ENCODE measurements at regions of chr11 and their contacts with region 1.

Region 1: GRCh38 chr11:62169091-62169847 is 20.7 kb upstream of the SCGB1D1 start:
- DNase-seq: no peak
- H3K4me3 ChIP-seq: no peak overlapping the region
- H3K4me3 Mint-ChIP-seq: no peak overlapping the region
- H3K27ac Mint-ChIP-seq: no peak overlapping the region
- H3K4me1 ChIP-seq: no peaks in the 10 kb centered on the region
- H3K4me1 Mint-ChIP-seq: no peaks in the 10 kb centered on the region
- H3K27me3 ChIP-seq: 0 out of 2 replicates have a peak, but pooled peaks cover 1% of the 10 kb centered on the region
- H3K27me3 Mint-ChIP-seq: peaks cover 12% of the 10 kb centered on the region
- CTCF ChIP-seq: no peak

Region 2: GRCh38 chr11:62104816-62105653 is 64.2 kb before region 1 on chr11:
- CTCF ChIA-PET with region 1: no interaction called
- POLR2A ChIA-PET with region 1: no interaction called
- intact Hi-C with region 1: no loop called
- DNase-seq: no peak
- H3K4me3 ChIP-seq: no peak overlapping the region
- H3K4me3 Mint-ChIP-seq: no peak overlapping the region
- H3K27ac Mint-ChIP-seq: no peak overlapping the region
- H3K4me1 ChIP-seq: peaks cover 3% of the 10 kb centered on the region; the same call in 1 of the 2 replicates
- H3K4me1 Mint-ChIP-seq: no peaks in the 10 kb centered on the region
- H3K27me3 ChIP-seq: no peaks in the 10 kb centered on the region
- H3K27me3 Mint-ChIP-seq: no peaks in the 10 kb centered on the region
- CTCF ChIP-seq: no peak

Region 3: DNA sequence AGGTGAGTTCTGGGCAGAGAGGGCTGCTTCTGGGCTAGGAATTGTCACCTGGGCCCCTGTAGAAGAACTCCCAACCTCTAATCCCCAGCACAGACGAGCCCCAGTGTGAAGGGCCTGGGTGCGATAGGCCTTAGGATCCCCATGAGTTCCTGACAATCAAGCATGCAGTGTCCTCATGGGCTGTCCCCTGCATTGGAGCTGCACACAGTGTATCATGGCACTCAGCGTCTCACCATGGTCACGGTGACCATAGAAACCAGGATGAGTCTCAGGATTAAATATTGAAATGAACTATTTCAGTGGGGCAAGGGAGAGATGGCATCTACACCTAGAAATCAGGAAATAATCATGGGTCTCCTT is 39.5 kb after region 1 on chr11:
- CTCF ChIA-PET with region 1: interaction called, 4 read pairs
- POLR2A ChIA-PET with region 1: no interaction called
- intact Hi-C with region 1: loop called (anchors 1 kb)
- DNase-seq: no peak
- H3K4me3 ChIP-seq: no peak overlapping the region
- H3K4me3 Mint-ChIP-seq: no peak overlapping the region
- H3K27ac Mint-ChIP-seq: no peak overlapping the region
- H3K4me1 ChIP-seq: no peaks in the 10 kb centered on the region
- H3K4me1 Mint-ChIP-seq: no peaks in the 10 kb centered on the region
- H3K27me3 ChIP-seq: no peaks in the 10 kb centered on the region; the same call in 1 of the 2 replicates
- H3K27me3 Mint-ChIP-seq: peaks cover 14% of the 10 kb centered on the region
- CTCF ChIP-seq: no peak

Region 4: GRCh38 chr11:62241095-62241494 is 71.8 kb after region 1 on chr11:
- CTCF ChIA-PET with region 1: no interaction called
- POLR2A ChIA-PET with region 1: no interaction called
- intact Hi-C with region 1: no loop called
- DNase-seq: no peak
- H3K4me3 ChIP-seq: no peak overlapping the region
- H3K4me3 Mint-ChIP-seq: no peak overlapping the region
- H3K27ac Mint-ChIP-seq: no peak overlapping the region
- H3K4me1 ChIP-seq: no peaks in the 10 kb centered on the region
- H3K4me1 Mint-ChIP-seq: no peaks in the 10 kb centered on the region
- H3K27me3 ChIP-seq: no peaks in the 10 kb centered on the region
- H3K27me3 Mint-ChIP-seq: peaks cover 14% of the 10 kb centered on the region
- CTCF ChIP-seq: no peak

Region 5: DNA sequence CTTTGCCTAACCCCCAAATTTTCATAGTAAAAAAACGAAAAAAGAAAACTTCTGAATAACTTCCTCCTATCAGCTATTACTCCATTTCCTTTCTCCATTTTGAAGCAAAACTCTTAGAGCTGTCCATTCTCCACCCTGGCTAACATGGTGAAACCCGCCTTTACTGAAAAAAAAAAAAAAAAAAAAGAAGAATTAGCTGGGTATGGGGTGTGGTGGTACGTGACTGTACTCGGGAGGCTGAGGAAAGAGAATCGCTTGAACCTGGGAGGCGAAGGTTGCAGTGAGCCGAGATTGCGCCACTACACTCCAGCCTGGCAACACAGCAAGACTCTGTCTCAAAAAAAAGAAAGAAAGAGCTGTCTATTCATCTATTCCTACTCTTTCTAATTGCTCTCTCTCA is 647.3 kb after region 1 on chr11:
- CTCF ChIA-PET with region 1: no interaction called
- POLR2A ChIA-PET with region 1: no interaction called
- intact Hi-C with region 1: no loop called
- DNase-seq: no peak
- H3K4me3 ChIP-seq: no peak overlapping the region
- H3K4me3 Mint-ChIP-seq: no peak overlapping the region
- H3K27ac Mint-ChIP-seq: no peak overlapping the region
- H3K4me1 ChIP-seq: no peaks in the 10 kb centered on the region
- H3K4me1 Mint-ChIP-seq: no peaks in the 10 kb centered on the region
- H3K27me3 ChIP-seq: no peaks in the 10 kb centered on the region
- H3K27me3 Mint-ChIP-seq: no peaks in the 10 kb centered on the region
- CTCF ChIP-seq: no peak

Measured in Caco-2 (cell line).